ENCODE measurements at regions of chr6 and their contacts with region 1.

Region 1: GRCh38 chr6:127971945-127972391 is 71.1 kb upstream of the THEMIS start:
- DNase-seq: peak; percentile 63
- H3K4me3 Mint-ChIP-seq: peak overlapping the region; percentile 84
- H3K27ac Mint-ChIP-seq: peak overlapping the region; percentile 95
- H3K4me1 Mint-ChIP-seq: peaks cover 67% of the 10 kb centered on the region
- H3K27me3 Mint-ChIP-seq: no peaks in the 10 kb centered on the region

Region 2: GRCh38 chr6:127516666-127517273 is 455.2 kb before region 1 on chr6:
- intact Hi-C with region 1: loop called (anchors 1 kb)
- DNase-seq: peak; percentile 48
- H3K4me3 Mint-ChIP-seq: peak overlapping the region; percentile 90
- H3K27ac Mint-ChIP-seq: peak overlapping the region; percentile 70
- H3K4me1 Mint-ChIP-seq: peaks cover 54% of the 10 kb centered on the region
- H3K27me3 Mint-ChIP-seq: peaks cover 14% of the 10 kb centered on the region

Region 3: DNA sequence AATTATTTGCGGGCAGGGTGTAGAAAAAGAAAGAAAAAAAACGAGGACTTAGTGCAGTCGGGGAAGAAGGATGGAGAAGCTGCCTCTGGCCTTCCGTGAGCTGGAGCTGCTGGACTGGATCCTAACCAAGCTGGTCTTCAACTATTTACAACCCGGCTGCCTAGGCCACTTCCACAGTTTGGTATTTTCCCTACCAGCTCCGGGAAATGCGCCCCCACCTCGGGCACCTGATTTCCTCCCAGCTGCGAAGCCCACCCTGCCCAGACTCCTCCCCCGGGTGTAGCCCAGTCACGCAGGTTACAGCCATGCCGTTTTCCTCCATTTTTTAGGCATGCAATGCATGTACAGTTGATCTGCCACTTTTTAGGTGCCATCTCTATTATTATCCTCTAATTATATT is 92.3 kb before region 1 on chr6:
- intact Hi-C with region 1: loop called (anchors 1 kb)
- DNase-seq: no peak
- H3K4me3 Mint-ChIP-seq: peak overlapping the region; percentile 60
- H3K27ac Mint-ChIP-seq: peak overlapping the region; percentile 56
- H3K4me1 Mint-ChIP-seq: peaks cover 65% of the 10 kb centered on the region
- H3K27me3 Mint-ChIP-seq: no peaks in the 10 kb centered on the region

Region 4: DNA sequence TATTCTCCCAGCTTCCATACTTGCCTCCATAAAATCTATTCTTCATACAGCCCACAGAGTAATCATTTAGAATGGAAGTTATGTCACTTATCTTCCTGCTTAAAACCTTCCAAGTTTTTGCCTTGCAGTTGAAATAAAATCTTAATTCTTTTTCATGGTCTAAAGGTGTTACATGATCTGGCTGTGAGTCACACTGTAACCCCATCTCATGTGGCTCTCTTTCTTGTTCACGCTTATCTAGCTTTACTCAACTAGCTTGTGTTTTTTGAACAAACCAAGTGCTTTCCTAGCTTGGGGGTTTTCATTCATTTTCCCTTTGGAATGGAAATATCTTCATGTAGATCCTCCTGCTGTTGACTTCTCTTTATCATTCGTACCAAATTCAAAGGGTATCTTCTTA is 47.5 kb before region 1 on chr6:
- intact Hi-C with region 1: loop called (anchors 1 kb)
- DNase-seq: no peak
- H3K4me3 Mint-ChIP-seq: no peak overlapping the region
- H3K27ac Mint-ChIP-seq: peak overlapping the region; percentile 14
- H3K4me1 Mint-ChIP-seq: peaks cover 55% of the 10 kb centered on the region
- H3K27me3 Mint-ChIP-seq: no peaks in the 10 kb centered on the region

Region 5: GRCh38 chr6:127990074-127990473 is 18.1 kb after region 1 on chr6:
- intact Hi-C with region 1: loop called (anchors 2 kb)
- DNase-seq: no peak
- H3K4me3 Mint-ChIP-seq: no peak overlapping the region
- H3K27ac Mint-ChIP-seq: no peak overlapping the region
- H3K4me1 Mint-ChIP-seq: peaks cover 8% of the 10 kb centered on the region
- H3K27me3 Mint-ChIP-seq: no peaks in the 10 kb centered on the region

Region 6: GRCh38 chr6:128520436-128521281 is 548.7 kb after region 1 on chr6 and contains the start of gene PTPRK:
- intact Hi-C with region 1: loop called (anchors 1 kb)
- DNase-seq: peak; percentile 81
- H3K4me3 Mint-ChIP-seq: peak within 1 kb of the TSS; percentile 93
- H3K27ac Mint-ChIP-seq: peak within 1 kb of the TSS; percentile 86
- H3K4me1 Mint-ChIP-seq: peaks cover 23% of the 10 kb centered on the region
- H3K27me3 Mint-ChIP-seq: peaks cover 76% of the 10 kb centered on the region
- total RNA-seq, gene PTPRK: 3.1 and 3.2 TPM in 2 replicates